CD8-positive, alpha-beta T cell (primary cell): ENCODE measurements at regions of chr6 and their contacts with region 1.

Region 1: DNA sequence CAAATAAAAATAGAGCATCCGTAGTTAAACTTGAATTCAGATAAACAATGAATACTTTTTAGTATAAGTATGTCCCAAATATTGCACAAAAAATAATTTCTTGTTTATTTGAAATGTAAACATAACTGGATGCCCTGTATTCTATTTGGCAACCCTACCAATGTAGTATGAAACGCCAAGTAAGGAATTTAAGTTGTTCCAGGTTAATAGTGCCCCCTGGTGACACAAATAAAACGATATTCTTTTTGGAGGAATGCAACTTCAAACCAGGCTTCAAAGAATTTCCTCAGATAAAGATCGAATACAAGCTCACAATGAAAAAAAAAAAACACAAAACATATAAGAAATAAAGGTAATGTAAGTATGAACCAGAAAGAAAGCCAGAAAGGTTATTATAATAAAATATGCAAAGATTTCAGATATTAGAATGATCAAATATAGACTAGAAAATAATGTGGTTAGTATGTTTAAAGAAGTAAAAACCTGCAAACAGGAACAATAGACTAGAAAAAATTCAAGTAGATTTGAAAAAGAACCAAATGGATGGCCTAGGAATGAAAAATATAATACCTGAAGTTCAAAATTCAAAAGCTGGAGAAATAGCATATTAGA is 18.4 kb upstream of the AKAP7 start:
- DNase-seq: peak in 3 of 9 experiments; percentile 7 to 64 (median 54)
- ATAC-seq: no peak
- H3K4me3 ChIP-seq: no peak overlapping the region
- H3K4me3 Mint-ChIP-seq: no peak overlapping the region
- H3K27ac ChIP-seq: no peak overlapping the region
- H3K27ac Mint-ChIP-seq: no peak overlapping the region
- H3K4me1 ChIP-seq: no peaks in the 10 kb centered on the region
- H3K4me1 Mint-ChIP-seq: no peaks in the 10 kb centered on the region
- H3K27me3 ChIP-seq: no peaks in the 10 kb centered on the region
- H3K27me3 Mint-ChIP-seq: no peaks in the 10 kb centered on the region
- CTCF ChIP-seq: peak; percentile 60

Region 2: DNA sequence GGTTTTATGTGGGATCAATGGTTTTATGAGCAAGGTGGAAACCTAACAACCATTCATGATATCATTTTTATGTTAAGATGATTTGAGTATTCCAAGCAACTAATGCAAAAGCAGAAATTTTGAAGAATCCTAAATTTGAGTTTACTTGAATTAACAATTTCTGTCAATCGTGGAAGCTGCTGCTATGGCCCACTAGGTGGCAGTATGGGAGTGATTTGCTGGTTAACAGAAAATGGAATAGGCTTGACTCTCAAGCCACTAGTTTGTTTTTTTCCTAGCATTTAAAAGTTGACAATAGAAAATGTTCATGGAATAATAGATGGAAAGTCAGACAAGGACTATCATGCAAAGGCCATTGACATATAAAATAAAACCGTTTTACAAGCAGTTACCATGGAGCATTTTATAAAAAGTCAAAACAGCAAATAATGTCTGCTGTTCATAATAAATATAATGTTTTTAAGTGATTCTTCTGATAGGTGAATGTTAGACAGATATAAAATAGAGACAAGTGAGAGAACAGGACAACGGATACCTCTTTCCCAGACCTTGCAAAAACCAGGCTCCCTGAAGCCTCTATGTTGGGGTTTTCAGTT is 794.1 kb before region 1 on chr6:
- CTCF ChIA-PET with region 1: no interaction called
- POLR2A ChIA-PET with region 1: no interaction called
- intact Hi-C with region 1: loop called in 1 of 2 experiments (anchors 10 kb)
- DNase-seq: peak in 8 of 9 experiments; percentile 31 to 81 (median 58)
- ATAC-seq: peak; percentile 42
- H3K4me3 ChIP-seq: no peak overlapping the region
- H3K4me3 Mint-ChIP-seq: no peak overlapping the region
- H3K27ac ChIP-seq: no peak overlapping the region
- H3K27ac Mint-ChIP-seq: no peak overlapping the region
- H3K4me1 ChIP-seq: no peaks in the 10 kb centered on the region
- H3K4me1 Mint-ChIP-seq: peaks cover 2% of the 10 kb centered on the region
- H3K27me3 ChIP-seq: no peaks in the 10 kb centered on the region
- H3K27me3 Mint-ChIP-seq: no peaks in the 10 kb centered on the region
- CTCF ChIP-seq: peak; percentile 92

Region 3: GRCh38 chr6:130879826-130880225 is 237.0 kb before region 1 on chr6:
- CTCF ChIA-PET with region 1: interaction called, 148 read pairs
- POLR2A ChIA-PET with region 1: no interaction called
- intact Hi-C with region 1: loop called (anchors 1 kb)
- DNase-seq: no peak
- ATAC-seq: no peak
- H3K4me3 ChIP-seq: no peak overlapping the region
- H3K4me3 Mint-ChIP-seq: no peak overlapping the region
- H3K27ac ChIP-seq: no peak overlapping the region
- H3K27ac Mint-ChIP-seq: no peak overlapping the region
- H3K4me1 ChIP-seq: no peaks in the 10 kb centered on the region
- H3K4me1 Mint-ChIP-seq: no peaks in the 10 kb centered on the region
- H3K27me3 ChIP-seq: no peaks in the 10 kb centered on the region
- H3K27me3 Mint-ChIP-seq: no peaks in the 10 kb centered on the region
- CTCF ChIP-seq: no peak

Region 4: GRCh38 chr6:130893277-130893676 is 223.6 kb before region 1 on chr6:
- CTCF ChIA-PET with region 1: interaction called, 11 read pairs
- POLR2A ChIA-PET with region 1: no interaction called
- intact Hi-C with region 1: no loop called
- DNase-seq: no peak
- ATAC-seq: no peak
- H3K4me3 ChIP-seq: no peak overlapping the region
- H3K4me3 Mint-ChIP-seq: no peak overlapping the region
- H3K27ac ChIP-seq: no peak overlapping the region
- H3K27ac Mint-ChIP-seq: no peak overlapping the region
- H3K4me1 ChIP-seq: no peaks in the 10 kb centered on the region
- H3K4me1 Mint-ChIP-seq: no peaks in the 10 kb centered on the region
- H3K27me3 ChIP-seq: no peaks in the 10 kb centered on the region
- H3K27me3 Mint-ChIP-seq: no peaks in the 10 kb centered on the region
- CTCF ChIP-seq: no peak

Region 5: GRCh38 chr6:131129689-131130545 is 13.1 kb after region 1 on chr6:
- CTCF ChIA-PET with region 1: interaction called, 11 read pairs
- POLR2A ChIA-PET with region 1: no interaction called
- intact Hi-C with region 1: no loop called
- DNase-seq: no peak
- ATAC-seq: no peak
- H3K4me3 ChIP-seq: no peak overlapping the region
- H3K4me3 Mint-ChIP-seq: no peak overlapping the region
- H3K27ac ChIP-seq: no peak overlapping the region
- H3K27ac Mint-ChIP-seq: no peak overlapping the region
- H3K4me1 ChIP-seq: peaks cover 4% of the 10 kb centered on the region
- H3K4me1 Mint-ChIP-seq: peaks cover 7% of the 10 kb centered on the region
- H3K27me3 ChIP-seq: no peaks in the 10 kb centered on the region
- H3K27me3 Mint-ChIP-seq: peaks cover 4% of the 10 kb centered on the region
- CTCF ChIP-seq: no peak

Region 6: DNA sequence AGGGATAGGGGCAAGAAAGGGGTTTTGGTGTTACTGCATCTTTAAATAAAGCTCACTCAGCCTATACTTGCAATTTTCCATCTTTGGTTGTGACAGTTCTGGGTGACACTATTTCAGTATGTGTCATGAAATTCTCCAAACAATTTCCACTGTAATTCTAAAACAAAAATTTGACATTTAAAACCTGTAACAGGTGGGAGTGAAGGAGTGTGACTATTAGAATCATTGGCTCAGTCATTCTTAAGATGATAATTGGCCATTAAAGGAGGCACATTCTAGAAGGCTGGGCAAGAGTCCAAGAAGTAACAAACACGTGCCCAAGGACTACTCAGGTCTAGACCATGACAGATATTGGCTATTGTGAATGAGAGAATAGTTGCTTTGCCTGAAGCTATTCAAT is 302.8 kb after region 1 on chr6:
- CTCF ChIA-PET with region 1: no interaction called
- POLR2A ChIA-PET with region 1: no interaction called
- intact Hi-C with region 1: no loop called
- DNase-seq: no peak
- ATAC-seq: no peak
- H3K4me3 ChIP-seq: no peak overlapping the region
- H3K4me3 Mint-ChIP-seq: no peak overlapping the region
- H3K27ac ChIP-seq: no peak overlapping the region
- H3K27ac Mint-ChIP-seq: no peak overlapping the region
- H3K4me1 ChIP-seq: no peaks in the 10 kb centered on the region
- H3K4me1 Mint-ChIP-seq: peaks cover 8% of the 10 kb centered on the region
- H3K27me3 ChIP-seq: no peaks in the 10 kb centered on the region
- H3K27me3 Mint-ChIP-seq: no peaks in the 10 kb centered on the region
- CTCF ChIP-seq: no peak